ENCODE measurements at regions of chr5 and their contacts with region 1.

Region 1: DNA sequence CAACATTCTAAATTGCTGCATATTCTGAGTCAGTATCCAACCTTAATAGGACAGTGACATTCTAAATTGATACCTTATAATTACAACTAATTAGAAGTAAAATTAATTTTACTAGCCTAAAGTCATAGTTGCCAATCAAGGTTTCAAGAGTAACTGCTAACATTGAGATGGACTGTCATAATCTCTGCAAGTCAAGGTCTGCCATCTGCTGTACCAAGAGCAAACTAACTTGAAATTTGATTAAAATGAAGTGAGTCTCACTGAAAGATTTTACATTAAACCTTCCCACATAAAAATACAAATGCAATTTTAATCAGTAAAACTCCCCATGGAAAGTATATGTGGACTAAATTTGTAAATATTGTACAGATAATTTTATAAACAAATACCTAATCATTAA is 235.3 kb downstream of the PRDM9 start:
- DNase-seq: no peak
- ATAC-seq: no peak
- H3K4me3 ChIP-seq: no peak overlapping the region
- H3K27ac ChIP-seq: no peak overlapping the region
- H3K4me1 ChIP-seq: no peaks in the 10 kb centered on the region
- H3K27me3 ChIP-seq: no peaks in the 10 kb centered on the region
- CTCF ChIP-seq: peak in 6 of 9 donors; percentile 7 to 41 (median 26)

Region 2: GRCh38 chr5:23219989-23220737 is 522.5 kb before region 1 on chr5:
- intact Hi-C with region 1: loop called in 1 of 10 experiments (anchors 10 kb)
- DNase-seq: no peak
- ATAC-seq: no peak
- H3K4me3 ChIP-seq: no peak overlapping the region
- H3K27ac ChIP-seq: no peak overlapping the region
- H3K4me1 ChIP-seq: no peaks in the 10 kb centered on the region
- H3K27me3 ChIP-seq: no peaks in the 10 kb centered on the region
- CTCF ChIP-seq: no peak

Region 3: DNA sequence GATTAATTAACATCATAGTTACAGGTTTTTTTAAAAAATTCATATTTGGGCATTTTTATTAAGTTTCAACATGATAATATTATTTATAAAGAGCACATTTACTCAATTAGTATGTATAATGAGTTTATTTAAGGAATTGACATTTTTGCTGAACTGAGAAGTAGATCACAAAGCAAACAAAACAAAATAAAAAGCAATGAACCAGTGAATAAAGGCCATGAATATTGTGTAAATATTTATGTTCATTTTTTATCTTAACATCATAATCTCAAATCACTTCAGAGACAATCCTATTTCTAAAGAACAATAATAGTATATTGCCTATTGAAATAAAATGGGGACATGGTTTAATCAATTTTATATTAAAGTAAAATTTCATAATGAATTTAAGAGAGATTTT is 397.0 kb before region 1 on chr5:
- intact Hi-C with region 1: loop called in 7 of 10 experiments (anchors 5 to 10 kb)
- DNase-seq: no peak
- ATAC-seq: no peak
- H3K4me3 ChIP-seq: no peak overlapping the region
- H3K27ac ChIP-seq: no peak overlapping the region
- H3K4me1 ChIP-seq: no peaks in the 10 kb centered on the region
- H3K27me3 ChIP-seq: no peaks in the 10 kb centered on the region
- CTCF ChIP-seq: no peak

Region 4: DNA sequence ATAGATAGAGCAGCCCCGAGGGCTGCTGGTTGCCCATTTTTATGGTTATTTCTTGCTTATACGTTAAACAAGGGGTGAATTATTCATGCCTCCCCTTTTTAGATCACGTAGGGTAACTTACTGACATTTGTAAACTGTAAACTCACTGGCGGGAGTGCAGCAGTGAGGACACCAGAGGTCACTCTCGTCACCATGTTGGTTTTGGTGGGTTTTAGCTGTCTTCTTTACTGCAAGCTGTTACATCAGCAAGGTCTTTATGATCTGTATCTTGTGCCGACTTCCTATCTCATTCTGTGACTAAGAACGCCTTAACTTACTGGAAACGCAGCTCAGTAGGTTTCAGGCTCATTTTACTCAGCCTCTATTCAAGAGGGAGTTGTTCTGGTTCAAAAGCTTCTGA is 390.3 kb before region 1 on chr5:
- intact Hi-C with region 1: loop called in 7 of 10 experiments (anchors 5 to 10 kb)
- DNase-seq: no peak
- ATAC-seq: no peak
- H3K4me3 ChIP-seq: no peak overlapping the region
- H3K27ac ChIP-seq: no peak overlapping the region
- H3K4me1 ChIP-seq: no peaks in the 10 kb centered on the region
- H3K27me3 ChIP-seq: no peaks in the 10 kb centered on the region
- CTCF ChIP-seq: peak in 8 of 9 donors; percentile 8 to 59 (median 46)